H1 (cell line): ENCODE measurements at regions of chr12 and their contacts with region 1.

Region 1: GRCh38 chr12:108495054-108495453 is 20.0 kb upstream of the FICD start:
- DNase-seq: peak in 1 of 2 experiments; percentile 80
- H3K4me3 ChIP-seq: no peak overlapping the region
- H3K27ac ChIP-seq: no peak overlapping the region
- H3K4me1 ChIP-seq: no peaks in the 10 kb centered on the region
- H3K27me3 ChIP-seq: no peaks in the 10 kb centered on the region
- CTCF ChIP-seq: peak; percentile 45 to 84 (median 76)
- EP300 ChIP-seq: no peak
- POLR2A ChIP-seq: no peak
- RAD21 ChIP-seq: peak; percentile 87 to 89

Region 2: DNA sequence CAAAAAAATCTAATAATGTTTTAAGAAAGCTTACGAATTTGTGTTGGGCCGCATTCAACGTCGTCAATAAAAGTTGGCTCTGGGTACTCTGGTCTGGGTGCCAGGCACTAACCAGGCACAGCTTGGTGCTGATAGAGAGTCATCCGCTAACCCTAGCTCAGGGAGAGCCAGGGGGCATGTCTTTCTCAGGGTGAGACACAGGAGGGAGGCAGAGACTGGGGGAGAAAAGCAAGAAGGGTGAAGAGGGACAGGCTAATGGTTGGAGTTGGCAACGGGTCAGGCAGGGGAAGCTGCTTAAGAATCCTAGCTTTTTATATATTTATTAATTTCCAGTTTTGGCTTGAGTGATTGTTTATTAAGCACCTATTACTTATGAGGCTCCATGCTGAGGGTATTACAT is 260.9 kb before region 1 on chr12:
- CTCF ChIA-PET with region 1: interaction called, 35 read pairs
- POLR2A ChIA-PET with region 1: no interaction called
- DNase-seq: no peak
- H3K4me3 ChIP-seq: no peak overlapping the region
- H3K27ac ChIP-seq: no peak overlapping the region
- H3K4me1 ChIP-seq: peaks cover 5 to 27% (median 11%) of the 10 kb centered on the region in 4 experiments; a peak in 6 of 7 replicates
- H3K27me3 ChIP-seq: no peaks in the 10 kb centered on the region
- CTCF ChIP-seq: peak in 2 of 3 experiments; percentile 21 to 24; a peak in 1 of 4 replicates
- EP300 ChIP-seq: no peak
- POLR2A ChIP-seq: no peak
- RAD21 ChIP-seq: peak; percentile 49 to 67

Region 3: DNA sequence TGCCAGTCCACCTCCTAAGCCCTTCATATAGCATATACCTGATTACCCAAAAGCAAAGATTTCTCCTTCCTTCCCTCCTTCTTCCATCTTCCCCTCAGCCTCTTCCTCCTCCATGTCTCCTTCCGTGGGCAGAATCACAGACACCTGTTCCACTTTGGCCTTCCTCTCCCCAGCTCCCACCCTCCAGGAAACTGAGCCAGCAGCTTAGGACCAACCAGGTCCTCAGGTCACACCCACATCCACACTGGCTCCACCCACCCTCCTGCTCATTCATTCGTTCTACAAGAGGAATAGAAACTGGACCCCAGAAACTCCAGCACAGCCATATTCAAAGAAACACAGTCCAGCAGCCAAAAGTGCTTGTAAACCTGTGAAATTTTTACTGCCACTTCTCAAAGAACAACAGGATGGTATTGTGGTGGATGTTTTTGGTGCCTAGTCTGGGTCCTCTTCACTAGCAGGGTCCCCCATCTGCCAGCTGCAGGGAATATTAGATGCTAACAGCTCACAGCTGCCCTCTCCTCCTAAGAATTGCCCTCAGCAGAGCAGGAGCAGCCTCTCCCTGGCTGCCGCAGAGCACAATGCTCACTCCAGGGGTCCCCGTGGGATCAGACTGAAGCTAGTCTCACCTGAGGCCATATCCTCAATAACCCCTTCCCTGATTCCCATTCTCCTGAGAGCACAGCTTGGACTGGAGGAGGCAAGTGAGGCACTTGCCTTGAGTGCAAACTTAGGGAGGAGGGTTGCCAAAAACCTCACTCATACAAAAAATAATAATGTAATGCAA is 174.4 kb before region 1 on chr12:
- CTCF ChIA-PET with region 1: interaction called, 11 read pairs
- POLR2A ChIA-PET with region 1: no interaction called
- DNase-seq: no peak
- H3K4me3 ChIP-seq: no peak overlapping the region
- H3K27ac ChIP-seq: no peak overlapping the region
- H3K4me1 ChIP-seq: peaks cover 9 to 34% (median 14%) of the 10 kb centered on the region in 4 experiments
- H3K27me3 ChIP-seq: no peaks in the 10 kb centered on the region
- CTCF ChIP-seq: no peak
- EP300 ChIP-seq: no peak
- POLR2A ChIP-seq: no peak
- RAD21 ChIP-seq: peak in 1 of 2 experiments; percentile 27; a peak in 1 of 4 replicates

Region 4: GRCh38 chr12:108468201-108468968 is 26.7 kb before region 1 on chr12:
- CTCF ChIA-PET with region 1: interaction called, 53 read pairs
- POLR2A ChIA-PET with region 1: interaction called, 3 read pairs
- DNase-seq: no peak
- H3K4me3 ChIP-seq: no peak overlapping the region
- H3K27ac ChIP-seq: no peak overlapping the region
- H3K4me1 ChIP-seq: no peaks in the 10 kb centered on the region
- H3K27me3 ChIP-seq: no peaks in the 10 kb centered on the region
- CTCF ChIP-seq: no peak
- EP300 ChIP-seq: no peak
- POLR2A ChIP-seq: no peak
- RAD21 ChIP-seq: no peak

Region 5: GRCh38 chr12:108507971-108508642 is 13.1 kb after region 1 on chr12:
- CTCF ChIA-PET with region 1: interaction called, 21 read pairs
- POLR2A ChIA-PET with region 1: no interaction called
- DNase-seq: no peak
- H3K4me3 ChIP-seq: no peak overlapping the region
- H3K27ac ChIP-seq: no peak overlapping the region
- H3K4me1 ChIP-seq: 0 out of 7 replicates have a peak, but pooled peaks cover 0 to 3% (median 0%) of the 10 kb centered on the region in 4 experiments
- H3K27me3 ChIP-seq: no peaks in the 10 kb centered on the region
- CTCF ChIP-seq: no peak
- EP300 ChIP-seq: no peak
- POLR2A ChIP-seq: no peak
- RAD21 ChIP-seq: no peak

Region 6: GRCh38 chr12:108573317-108573716 is 78.3 kb after region 1 on chr12:
- CTCF ChIA-PET with region 1: no interaction called
- POLR2A ChIA-PET with region 1: no interaction called
- DNase-seq: no peak
- H3K4me3 ChIP-seq: no peak overlapping the region
- H3K27ac ChIP-seq: no peak overlapping the region
- H3K4me1 ChIP-seq: no peaks in the 10 kb centered on the region
- H3K27me3 ChIP-seq: no peaks in the 10 kb centered on the region
- CTCF ChIP-seq: no peak
- EP300 ChIP-seq: no peak
- POLR2A ChIP-seq: no peak
- RAD21 ChIP-seq: no peak